Activated naive CD8-positive, alpha-beta T cell treated with anti-CD3 and anti-CD28 coated beads, Interleukin-2, amount 10 ng/mL, durations not matched to agents 7 days and 5 days (primary cell): ENCODE measurements at regions of chr7 and their contacts with region 1.

Region 1: DNA sequence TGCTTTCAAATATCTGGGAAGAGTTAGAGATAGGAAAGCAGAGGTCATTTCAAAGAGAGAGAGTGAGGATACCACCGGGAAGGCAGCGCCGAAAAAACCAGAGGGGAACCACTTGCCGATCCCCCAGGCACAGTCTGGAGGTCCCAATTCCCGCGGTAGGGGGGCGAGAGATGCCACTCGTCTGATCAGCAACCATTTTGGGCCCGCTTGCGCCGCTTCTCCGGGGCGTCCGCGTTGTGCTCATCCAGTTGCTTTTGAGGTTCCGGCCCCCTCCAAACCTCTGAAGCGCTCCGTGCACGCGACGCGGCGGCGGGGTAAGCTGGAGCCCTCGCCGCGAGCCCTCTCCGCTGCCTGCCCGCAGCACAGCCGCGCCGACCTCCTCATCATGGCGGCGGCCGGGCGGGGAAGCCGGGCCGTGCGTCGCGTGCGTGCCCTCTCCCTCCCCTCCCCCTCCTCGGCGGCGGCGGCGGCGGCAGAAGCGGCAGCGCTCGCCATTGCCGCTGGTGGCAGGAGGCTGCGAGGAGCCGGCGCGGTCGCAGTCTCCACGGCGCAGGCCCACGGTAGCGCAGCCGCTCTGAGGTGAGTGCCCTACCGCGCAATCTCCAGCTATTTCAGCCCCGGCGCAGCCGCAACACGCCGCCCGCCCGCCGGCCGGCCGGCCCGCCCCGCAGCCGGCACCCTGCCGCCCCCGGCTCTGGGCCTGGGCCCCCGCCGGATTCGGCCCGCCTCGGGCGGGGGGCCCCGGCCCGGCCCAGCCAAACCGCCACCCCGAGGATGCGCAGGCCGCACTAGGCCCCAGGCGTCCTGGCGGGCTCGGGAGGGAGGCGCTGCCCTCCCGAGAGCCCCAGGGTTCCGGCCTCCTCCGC is at the start of gene NRF1:
- DNase-seq: peak; percentile 96
- ATAC-seq: peak; percentile 86
- H3K4me3 Mint-ChIP-seq: peak within 1 kb of the TSS; percentile 98
- H3K27ac Mint-ChIP-seq: peak within 1 kb of the TSS; percentile 96
- H3K4me1 Mint-ChIP-seq: peaks cover 41% of the 10 kb centered on the region
- H3K27me3 Mint-ChIP-seq: no peaks in the 10 kb centered on the region
- total RNA-seq, gene NRF1: 32.5 to 33.6 TPM

Region 2: GRCh38 chr7:129825496-129826267 is 214.2 kb after region 1 on chr7:
- POLR2A ChIA-PET with region 1: interaction called, 10 read pairs
- DNase-seq: peak; percentile 97
- ATAC-seq: peak; percentile 78
- H3K4me3 Mint-ChIP-seq: peak overlapping the region; percentile 97
- H3K27ac Mint-ChIP-seq: peak overlapping the region; percentile 77
- H3K4me1 Mint-ChIP-seq: peaks cover 12% of the 10 kb centered on the region
- H3K27me3 Mint-ChIP-seq: peaks cover 2% of the 10 kb centered on the region